Heart right ventricle (tissue), 16 donors: ENCODE measurements at regions of chr1 and their contacts with region 1.

Region 1: GRCh38 chr1:89085781-89086180 is 20.8 kb upstream of the GBP1 start:
- DNase-seq: peak in 1 of 2 donors; percentile 76
- ATAC-seq: peak in 4 of 8 donors; percentile 67 to 82 (median 69)
- H3K4me3 ChIP-seq: no peak overlapping the region
- H3K27ac ChIP-seq: no peak overlapping the region
- H3K4me1 ChIP-seq: peaks cover 0 to 11% (median under 1%) of the 10 kb centered on the region in 9 donors
- H3K27me3 ChIP-seq: no peaks in the 10 kb centered on the region
- CTCF ChIP-seq: peak in 8 of 9 donors; percentile 60 to 91 (median 68)

Region 2: GRCh38 chr1:89142160-89142559 is 56.4 kb after region 1 on chr1:
- intact Hi-C with region 1: loop called in 1 of 10 experiments (anchors 5 kb)
- DNase-seq: no peak
- ATAC-seq: no peak
- H3K4me3 ChIP-seq: no peak overlapping the region
- H3K27ac ChIP-seq: no peak overlapping the region
- H3K4me1 ChIP-seq: no peaks in the 10 kb centered on the region
- H3K27me3 ChIP-seq: no peaks in the 10 kb centered on the region
- CTCF ChIP-seq: no peak

Region 3: GRCh38 chr1:89276690-89277089 is 190.9 kb after region 1 on chr1:
- intact Hi-C with region 1: loop called in 2 of 10 experiments (anchors 5 kb)
- DNase-seq: no peak
- ATAC-seq: no peak
- H3K4me3 ChIP-seq: no peak overlapping the region
- H3K27ac ChIP-seq: no peak overlapping the region
- H3K4me1 ChIP-seq: peaks cover 0 to 59% (median 0%) of the 10 kb centered on the region in 9 donors
- H3K27me3 ChIP-seq: no peaks in the 10 kb centered on the region
- CTCF ChIP-seq: peak in 3 of 9 donors; percentile 23 to 49 (median 28)

Region 4: DNA sequence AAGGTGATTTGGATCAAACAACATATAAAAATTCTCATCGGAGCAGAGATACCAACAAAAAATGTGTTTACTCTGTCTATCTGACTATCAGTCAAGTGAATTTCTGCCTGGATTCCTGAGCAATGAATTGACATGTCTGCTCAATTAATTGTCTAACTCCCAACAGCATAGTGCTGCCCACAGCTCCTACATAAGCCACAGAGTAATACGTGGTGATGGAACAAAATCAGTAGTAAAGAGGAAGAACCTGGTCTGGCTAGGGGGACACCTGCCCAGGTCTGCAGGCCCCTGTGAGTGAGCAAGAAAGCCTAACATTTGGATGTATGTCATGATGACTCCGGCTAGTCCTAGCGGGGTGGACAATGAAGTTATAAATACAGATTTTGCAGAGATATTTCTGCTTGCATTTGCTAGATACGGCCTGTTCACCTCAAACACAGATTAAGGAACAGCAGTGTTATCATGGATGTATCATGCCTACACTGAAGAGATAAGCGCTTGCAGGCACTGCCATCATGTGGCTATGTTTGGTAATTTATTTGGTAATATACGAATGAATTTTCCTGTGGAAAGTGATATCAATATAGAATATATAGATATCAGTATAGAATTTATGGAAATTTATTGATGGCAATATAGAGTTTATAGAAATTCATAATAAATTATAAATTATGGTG is 369.2 kb after region 1 on chr1:
- intact Hi-C with region 1: loop called in 7 of 10 experiments (anchors 2 to 10 kb)
- DNase-seq: peak in 1 of 2 donors; percentile 39
- ATAC-seq: peak in 1 of 8 donors; percentile 61
- H3K4me3 ChIP-seq: no peak overlapping the region
- H3K27ac ChIP-seq: no peak overlapping the region
- H3K4me1 ChIP-seq: no peaks in the 10 kb centered on the region
- H3K27me3 ChIP-seq: no peaks in the 10 kb centered on the region
- CTCF ChIP-seq: peak; percentile 53 to 81 (median 68)